PC-9 (cell line): ENCODE measurements at regions of chr19 and their contacts with region 1.

Region 1: DNA sequence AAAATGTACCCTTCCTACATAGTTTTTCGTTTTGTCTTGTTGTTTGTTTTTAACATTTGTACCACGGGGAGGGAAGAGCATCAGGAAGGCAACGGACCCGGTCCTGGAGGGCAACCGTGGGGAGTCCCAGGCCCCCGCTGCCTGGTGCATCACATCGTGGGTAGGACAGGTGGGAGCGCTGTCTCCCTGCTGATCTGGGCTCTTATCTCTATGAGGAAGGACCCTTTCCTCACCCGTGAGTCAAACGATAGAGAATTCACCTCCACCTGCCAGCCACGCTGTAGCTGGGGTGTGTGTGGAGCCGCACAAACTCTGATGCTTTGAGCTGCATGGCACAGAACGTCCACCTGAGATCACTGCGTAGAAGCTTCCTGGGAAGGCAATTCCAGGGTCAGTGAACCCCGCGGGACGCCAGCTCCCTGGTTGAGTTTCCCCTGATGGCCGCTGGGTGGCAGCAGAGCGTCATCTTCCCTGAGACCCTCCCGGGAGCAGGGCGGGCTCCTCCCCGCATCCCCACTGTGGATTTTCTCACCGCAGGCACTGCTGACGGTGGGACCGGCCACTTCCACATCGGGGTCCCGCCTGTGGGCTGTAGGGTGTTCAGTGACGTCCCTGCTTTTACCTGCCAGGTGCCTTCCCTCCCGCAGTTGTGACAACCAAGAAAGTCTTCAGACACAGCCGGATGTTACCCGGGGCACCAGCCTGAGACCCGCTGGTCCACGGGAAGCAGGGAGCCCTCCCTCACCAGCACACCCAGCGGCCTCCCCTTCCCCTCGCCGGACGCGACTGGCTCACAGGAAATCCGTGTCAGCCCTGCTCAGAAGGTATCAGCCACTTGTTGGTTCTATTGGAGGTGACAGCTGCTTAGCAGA is 54.7 kb downstream of the ZNF787 start:
- DNase-seq: peak; percentile 51 to 71
- H3K4me3 ChIP-seq: no peak overlapping the region
- H3K27ac ChIP-seq: no peak overlapping the region
- H3K4me1 ChIP-seq: no peaks in the 10 kb centered on the region
- H3K27me3 ChIP-seq: peaks cover 56% of the 10 kb centered on the region
- CTCF ChIP-seq: peak; percentile 94

Region 2: DNA sequence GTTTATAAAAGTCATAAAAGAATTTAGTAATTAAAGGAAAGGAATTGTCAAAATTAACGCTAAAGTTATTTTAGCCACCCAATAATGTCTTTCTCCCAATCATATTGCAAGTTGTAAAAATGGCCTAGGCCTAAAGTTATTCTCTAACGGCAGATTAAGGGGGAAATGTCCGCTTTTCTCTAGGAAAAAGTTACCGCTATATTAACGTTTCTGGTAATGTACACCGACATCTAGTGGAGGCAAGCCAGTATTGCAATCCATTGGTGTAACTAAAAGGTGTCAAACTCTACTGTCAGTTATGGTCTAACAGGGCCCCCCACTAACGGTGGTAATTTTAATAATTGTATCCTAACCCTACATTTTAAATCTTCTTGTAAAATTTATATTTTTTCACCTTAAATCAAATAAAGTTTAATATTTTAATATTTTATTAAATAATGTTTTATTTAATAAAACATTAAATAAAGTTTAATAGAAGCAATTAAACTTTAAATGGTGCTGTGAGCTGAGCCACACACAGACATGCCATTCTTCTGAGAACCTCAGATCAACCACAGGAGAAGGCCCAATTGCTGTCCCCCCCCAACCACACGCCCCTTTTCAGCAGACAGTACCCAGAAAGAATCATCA is 284.1 kb after region 1 on chr19:
- CTCF ChIA-PET with region 1: no interaction called
- POLR2A ChIA-PET with region 1: no interaction called
- intact Hi-C with region 1: loop called (anchors 1 kb)
- DNase-seq: peak in 1 of 2 experiments; percentile 28
- H3K4me3 ChIP-seq: no peak overlapping the region
- H3K27ac ChIP-seq: no peak overlapping the region
- H3K4me1 ChIP-seq: no peaks in the 10 kb centered on the region
- H3K27me3 ChIP-seq: peaks cover 48% of the 10 kb centered on the region
- CTCF ChIP-seq: peak; percentile 92